Ascending aorta (tissue), 2 donors: ENCODE measurements at regions of chr1 and their contacts with region 1.

Region 1: GRCh38 chr1:227437495-227438008 is 119.3 kb upstream of the CDC42BPA start:
- DNase-seq: no peak
- H3K4me3 ChIP-seq: peak overlapping the region; percentile 27 to 61
- H3K27ac ChIP-seq: no peak overlapping the region
- H3K4me1 ChIP-seq: peaks cover 0 to 5% of the 10 kb centered on the region in 2 donors
- H3K27me3 ChIP-seq: no peaks in the 10 kb centered on the region
- CTCF ChIP-seq: peak; percentile 10 to 53 (median 23)

Region 2: GRCh38 chr1:226903819-226904716 is 533.5 kb before region 1 on chr1:
- intact Hi-C with region 1: loop called (anchors 10 kb)
- DNase-seq: no peak
- H3K4me3 ChIP-seq: no peak overlapping the region
- H3K27ac ChIP-seq: no peak overlapping the region
- H3K4me1 ChIP-seq: no peaks in the 10 kb centered on the region
- H3K27me3 ChIP-seq: no peaks in the 10 kb centered on the region
- CTCF ChIP-seq: no peak

Region 3: DNA sequence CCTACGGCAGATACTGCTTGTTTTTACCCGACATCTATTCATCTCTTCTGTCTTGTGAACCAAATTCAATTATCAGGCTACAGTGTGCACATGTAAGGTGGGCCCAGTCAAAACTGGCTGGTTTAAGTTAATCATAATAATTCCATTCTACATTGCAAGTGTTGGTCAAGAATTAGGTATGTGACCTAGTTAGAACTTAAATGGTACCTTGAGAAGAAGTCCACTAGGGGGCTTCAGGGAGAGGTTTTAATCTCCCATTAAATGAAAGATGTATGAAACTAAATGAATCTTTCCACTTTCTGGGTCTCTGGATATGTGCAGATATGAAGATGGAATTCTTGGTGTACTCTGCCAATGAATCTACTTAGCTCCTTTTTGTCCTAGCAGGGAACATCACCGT is 306.4 kb before region 1 on chr1:
- intact Hi-C with region 1: loop called (anchors 5 kb)
- DNase-seq: no peak
- H3K4me3 ChIP-seq: no peak overlapping the region
- H3K27ac ChIP-seq: no peak overlapping the region
- H3K4me1 ChIP-seq: no peaks in the 10 kb centered on the region
- H3K27me3 ChIP-seq: no peaks in the 10 kb centered on the region
- CTCF ChIP-seq: peak in 1 of 3 experiments; percentile 46

Region 4: GRCh38 chr1:227234998-227235405 is 202.6 kb before region 1 on chr1:
- intact Hi-C with region 1: loop called (anchors 10 kb)
- DNase-seq: no peak
- H3K4me3 ChIP-seq: no peak overlapping the region
- H3K27ac ChIP-seq: no peak overlapping the region
- H3K4me1 ChIP-seq: peaks cover 2% of the 10 kb centered on the region in 2 donors
- H3K27me3 ChIP-seq: no peaks in the 10 kb centered on the region
- CTCF ChIP-seq: peak in 1 of 3 experiments; percentile 28

Region 5: DNA sequence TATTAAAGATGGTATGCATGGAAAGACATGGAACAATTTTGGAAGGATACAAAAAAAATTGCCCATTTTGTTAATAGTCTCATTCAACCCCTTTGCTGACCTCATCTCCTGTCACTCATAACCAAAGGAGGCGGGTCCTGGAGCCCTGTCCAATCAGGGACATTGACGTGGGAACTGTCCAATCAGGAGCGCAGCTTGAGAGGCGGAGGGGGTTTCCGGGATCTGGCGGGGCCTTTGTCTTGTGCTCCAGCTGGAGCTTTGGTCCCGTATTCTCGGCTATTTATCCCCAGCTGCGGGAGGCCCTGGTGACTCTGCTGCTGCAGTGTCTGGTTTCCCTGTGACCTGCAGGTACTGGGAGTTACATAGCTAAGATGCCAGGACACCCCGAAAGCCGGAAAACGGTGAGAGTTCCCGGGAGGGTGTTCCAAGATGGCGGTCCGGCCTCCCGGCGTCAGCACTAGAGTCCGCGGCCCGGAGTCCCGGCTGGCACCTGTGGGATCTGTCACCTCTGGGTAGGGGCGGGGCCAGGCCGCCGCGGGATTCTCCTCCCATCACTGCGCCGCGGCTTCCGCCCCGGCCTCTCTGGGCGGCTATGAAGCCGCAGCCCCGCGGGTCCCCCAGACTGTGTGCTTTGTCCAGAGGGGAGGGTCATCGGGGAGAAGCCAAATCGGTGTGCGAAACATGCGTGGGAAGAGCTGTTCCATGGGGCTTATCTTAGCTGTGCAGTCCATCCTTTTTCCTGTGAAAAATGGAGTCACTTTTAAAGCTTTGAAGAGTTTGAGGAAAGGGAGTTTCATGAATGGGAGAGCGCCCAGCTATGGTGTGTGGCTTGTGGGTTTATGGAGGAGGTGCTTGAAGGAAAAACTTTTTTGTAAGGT is 126.0 kb after region 1 on chr1 and contains the start of gene ZNF678:
- intact Hi-C with region 1: no loop called
- DNase-seq: peak; percentile 78 to 95
- H3K4me3 ChIP-seq: peak within 1 kb of the TSS; percentile 65 to 71
- H3K27ac ChIP-seq: peak within 1 kb of the TSS; percentile 68 to 80
- H3K4me1 ChIP-seq: peaks cover 0 to 6% of the 10 kb centered on the region in 2 donors
- H3K27me3 ChIP-seq: no peaks in the 10 kb centered on the region
- CTCF ChIP-seq: no peak
- total RNA-seq, gene ZNF678: 0.75 TPM